ENCODE measurements at regions of chr10 and their contacts with region 1.

Region 1: DNA sequence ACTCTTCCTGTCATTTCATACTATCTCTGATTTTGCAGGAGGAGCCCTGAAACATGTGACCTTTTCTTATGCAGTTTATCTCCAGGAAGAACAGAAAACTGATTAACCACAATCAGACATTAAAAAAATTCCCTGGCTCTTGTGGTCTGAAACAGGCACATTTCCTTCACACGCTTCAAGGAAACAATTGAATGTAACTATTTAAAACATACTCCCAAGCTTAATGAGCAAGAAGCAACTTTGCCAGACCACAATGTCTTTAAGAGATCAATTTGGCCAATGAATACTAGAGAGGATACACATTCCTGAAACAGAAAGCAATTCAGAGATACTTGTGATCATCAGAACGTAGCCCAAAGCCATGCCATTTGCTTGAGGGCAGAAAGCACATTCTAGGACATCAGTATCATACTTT is 65.8 kb downstream of the PIP4K2A start:
- DNase-seq: no peak
- ATAC-seq: no peak
- H3K4me3 Mint-ChIP-seq: peak overlapping the region; percentile 24
- H3K27ac Mint-ChIP-seq: peak overlapping the region; percentile 18
- H3K4me1 Mint-ChIP-seq: peaks cover 90% of the 10 kb centered on the region
- H3K27me3 Mint-ChIP-seq: no peaks in the 10 kb centered on the region
- CTCF ChIP-seq: no peak

Region 2: GRCh38 chr10:22593026-22593425 is 55.5 kb before region 1 on chr10:
- CTCF ChIA-PET with region 1: no interaction called
- POLR2A ChIA-PET with region 1: no interaction called
- intact Hi-C with region 1: no loop called
- DNase-seq: no peak
- ATAC-seq: no peak
- H3K4me3 Mint-ChIP-seq: no peak overlapping the region
- H3K27ac Mint-ChIP-seq: peak overlapping the region; percentile 43
- H3K4me1 Mint-ChIP-seq: peaks cover 61% of the 10 kb centered on the region
- H3K27me3 Mint-ChIP-seq: no peaks in the 10 kb centered on the region
- CTCF ChIP-seq: no peak

Region 3: GRCh38 chr10:22682237-22683139 is 33.9 kb after region 1 on chr10:
- CTCF ChIA-PET with region 1: no interaction called
- POLR2A ChIA-PET with region 1: no interaction called
- intact Hi-C with region 1: loop called (anchors 5 kb)
- DNase-seq: no peak
- ATAC-seq: peak; percentile 29
- H3K4me3 Mint-ChIP-seq: peak overlapping the region; percentile 29
- H3K27ac Mint-ChIP-seq: peak overlapping the region; percentile 78
- H3K4me1 Mint-ChIP-seq: peaks cover 70% of the 10 kb centered on the region
- H3K27me3 Mint-ChIP-seq: no peaks in the 10 kb centered on the region
- CTCF ChIP-seq: no peak

Measured in activated B cell treated with CpG ODN at 0.5 μM for 24 hours (primary cell).